Caco-2 (cell line): ENCODE measurements at regions of chr1 and their contacts with region 1.

Region 1: GRCh38 chr1:45769261-45769932 is 18.9 kb upstream of the IPP start:
- DNase-seq: no peak
- H3K4me3 ChIP-seq: no peak overlapping the region
- H3K4me3 Mint-ChIP-seq: no peak overlapping the region
- H3K27ac Mint-ChIP-seq: no peak overlapping the region
- H3K4me1 ChIP-seq: no peaks in the 10 kb centered on the region
- H3K4me1 Mint-ChIP-seq: no peaks in the 10 kb centered on the region
- H3K27me3 ChIP-seq: no peaks in the 10 kb centered on the region
- H3K27me3 Mint-ChIP-seq: no peaks in the 10 kb centered on the region
- CTCF ChIP-seq: no peak

Region 2: DNA sequence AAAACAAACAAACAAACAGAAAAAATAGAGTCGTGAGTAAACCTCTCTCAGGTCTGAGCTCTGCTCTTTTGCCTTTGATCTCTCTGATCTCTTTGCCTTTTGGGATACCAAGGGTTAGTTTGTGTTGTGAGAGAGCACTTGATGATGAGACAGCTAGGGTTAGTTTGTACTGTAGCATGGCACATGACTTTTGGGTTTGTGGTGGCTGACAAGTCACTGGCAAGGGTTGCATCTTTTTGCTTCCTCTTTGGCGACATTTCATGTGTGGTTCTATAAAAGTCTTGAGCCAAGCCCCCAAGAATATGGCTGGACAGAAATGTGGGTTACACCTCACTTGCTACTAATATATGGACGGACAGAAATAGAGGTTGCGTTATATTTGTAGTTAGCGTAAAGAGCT is 338.9 kb before region 1 on chr1:
- CTCF ChIA-PET with region 1: no interaction called
- POLR2A ChIA-PET with region 1: interaction called, 10 read pairs
- intact Hi-C with region 1: no loop called
- DNase-seq: no peak
- H3K4me3 ChIP-seq: no peak overlapping the region
- H3K4me3 Mint-ChIP-seq: no peak overlapping the region
- H3K27ac Mint-ChIP-seq: no peak overlapping the region
- H3K4me1 ChIP-seq: no peaks in the 10 kb centered on the region
- H3K4me1 Mint-ChIP-seq: no peaks in the 10 kb centered on the region
- H3K27me3 ChIP-seq: no peaks in the 10 kb centered on the region
- H3K27me3 Mint-ChIP-seq: no peaks in the 10 kb centered on the region
- CTCF ChIP-seq: no peak

Region 3: DNA sequence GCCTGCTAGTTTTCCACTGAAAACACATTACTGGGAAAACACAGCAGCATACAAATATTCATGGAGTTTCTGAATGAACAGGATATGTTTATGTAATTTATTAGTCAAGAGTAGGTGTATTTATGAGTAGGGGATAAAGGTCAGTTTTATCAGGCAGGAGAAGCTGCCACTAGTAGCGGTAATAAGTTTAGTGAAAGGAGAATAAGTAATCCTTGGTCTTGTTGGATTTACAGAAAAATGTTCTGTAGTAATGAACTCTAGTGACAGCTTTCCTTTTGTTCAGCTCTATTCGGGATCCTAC is 35.2 kb after region 1 on chr1:
- CTCF ChIA-PET with region 1: no interaction called
- POLR2A ChIA-PET with region 1: no interaction called
- intact Hi-C with region 1: no loop called
- DNase-seq: no peak
- H3K4me3 ChIP-seq: peak overlapping the region; percentile 44
- H3K4me3 Mint-ChIP-seq: peak overlapping the region; percentile 98
- H3K27ac Mint-ChIP-seq: peak overlapping the region; percentile 26
- H3K4me1 ChIP-seq: peaks cover 10% of the 10 kb centered on the region; the same call in 1 of the 2 replicates
- H3K4me1 Mint-ChIP-seq: peaks cover 24% of the 10 kb centered on the region
- H3K27me3 ChIP-seq: no peaks in the 10 kb centered on the region
- H3K27me3 Mint-ChIP-seq: no peaks in the 10 kb centered on the region
- CTCF ChIP-seq: no peak

Region 4: GRCh38 chr1:45815667-45816458 is 46.5 kb after region 1 on chr1:
- CTCF ChIA-PET with region 1: no interaction called
- POLR2A ChIA-PET with region 1: no interaction called
- intact Hi-C with region 1: no loop called
- DNase-seq: no peak
- H3K4me3 ChIP-seq: no peak overlapping the region
- H3K4me3 Mint-ChIP-seq: no peak overlapping the region
- H3K27ac Mint-ChIP-seq: no peak overlapping the region
- H3K4me1 ChIP-seq: no peaks in the 10 kb centered on the region
- H3K4me1 Mint-ChIP-seq: no peaks in the 10 kb centered on the region
- H3K27me3 ChIP-seq: no peaks in the 10 kb centered on the region
- H3K27me3 Mint-ChIP-seq: no peaks in the 10 kb centered on the region
- CTCF ChIP-seq: no peak

Region 5: GRCh38 chr1:45876000-45876617 is 106.7 kb after region 1 on chr1:
- CTCF ChIA-PET with region 1: no interaction called
- POLR2A ChIA-PET with region 1: interaction called, 12 read pairs
- intact Hi-C with region 1: no loop called
- DNase-seq: no peak
- H3K4me3 ChIP-seq: no peak overlapping the region
- H3K4me3 Mint-ChIP-seq: no peak overlapping the region
- H3K27ac Mint-ChIP-seq: no peak overlapping the region
- H3K4me1 ChIP-seq: peaks cover 25% of the 10 kb centered on the region
- H3K4me1 Mint-ChIP-seq: peaks cover 4% of the 10 kb centered on the region
- H3K27me3 ChIP-seq: no peaks in the 10 kb centered on the region
- H3K27me3 Mint-ChIP-seq: no peaks in the 10 kb centered on the region
- CTCF ChIP-seq: no peak

Region 6: GRCh38 chr1:46333300-46334029 is 564.1 kb after region 1 on chr1:
- CTCF ChIA-PET with region 1: no interaction called
- POLR2A ChIA-PET with region 1: no interaction called
- intact Hi-C with region 1: no loop called
- DNase-seq: peak in 1 of 2 experiments; percentile 37
- H3K4me3 ChIP-seq: no peak overlapping the region
- H3K4me3 Mint-ChIP-seq: no peak overlapping the region
- H3K27ac Mint-ChIP-seq: no peak overlapping the region
- H3K4me1 ChIP-seq: no peaks in the 10 kb centered on the region
- H3K4me1 Mint-ChIP-seq: peaks cover under 1% of the 10 kb centered on the region
- H3K27me3 ChIP-seq: no peaks in the 10 kb centered on the region
- H3K27me3 Mint-ChIP-seq: no peaks in the 10 kb centered on the region
- CTCF ChIP-seq: peak in 1 of 2 experiments; percentile 32